ENCODE measurements at regions of chr10 and their contacts with region 1.

Region 1: GRCh38 chr10:70758757-70759514 is 26.2 kb downstream of the TBATA start:
- DNase-seq: peak; percentile 43
- ATAC-seq: peak; percentile 68
- H3K4me3 ChIP-seq: no peak overlapping the region
- H3K27ac ChIP-seq: no peak overlapping the region
- H3K4me1 ChIP-seq: peaks cover 2% of the 10 kb centered on the region
- H3K27me3 ChIP-seq: no peaks in the 10 kb centered on the region
- CTCF ChIP-seq: peak; percentile 76

Region 2: GRCh38 chr10:69696073-69696731 is 1062.7 kb before region 1 on chr10:
- intact Hi-C with region 1: no loop called
- DNase-seq: no peak
- ATAC-seq: peak; percentile 91
- H3K4me3 ChIP-seq: no peak overlapping the region
- H3K27ac ChIP-seq: no peak overlapping the region
- H3K4me1 ChIP-seq: no peaks in the 10 kb centered on the region
- H3K27me3 ChIP-seq: no peaks in the 10 kb centered on the region
- CTCF ChIP-seq: peak; percentile 70

Region 3: GRCh38 chr10:70461215-70461986 is 297.5 kb before region 1 on chr10:
- intact Hi-C with region 1: loop called (anchors 10 kb)
- DNase-seq: no peak
- ATAC-seq: peak; percentile 72
- H3K4me3 ChIP-seq: no peak overlapping the region
- H3K27ac ChIP-seq: no peak overlapping the region
- H3K4me1 ChIP-seq: peaks cover 18% of the 10 kb centered on the region
- H3K27me3 ChIP-seq: peaks cover 7% of the 10 kb centered on the region
- CTCF ChIP-seq: peak; percentile 86

Region 4: DNA sequence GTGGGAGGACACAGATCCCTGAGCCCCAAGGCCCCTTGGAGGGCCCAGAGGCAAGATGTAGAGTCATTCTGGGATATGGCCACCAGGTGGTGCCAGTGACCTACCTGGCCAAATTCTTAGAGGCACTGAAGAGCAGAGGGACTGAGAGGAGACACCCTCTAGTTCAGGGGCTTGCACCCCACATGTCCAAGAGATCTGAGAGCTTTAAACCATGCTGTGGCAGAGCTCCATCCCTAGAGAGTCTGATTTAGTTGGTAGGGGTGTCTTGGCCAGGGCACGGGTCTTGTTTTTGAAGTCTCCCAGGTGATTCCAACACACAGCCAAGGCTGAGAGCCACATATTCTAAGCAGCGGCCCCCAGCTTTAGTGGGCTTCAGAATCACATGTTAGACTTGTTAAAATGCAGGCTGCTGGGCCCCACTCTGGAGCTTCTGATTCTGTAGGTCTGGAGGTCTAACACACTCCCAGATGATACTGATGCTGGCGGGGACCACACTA is 208.9 kb before region 1 on chr10:
- intact Hi-C with region 1: loop called (anchors 5 kb)
- DNase-seq: no peak
- ATAC-seq: peak; percentile 79
- H3K4me3 ChIP-seq: no peak overlapping the region
- H3K27ac ChIP-seq: no peak overlapping the region
- H3K4me1 ChIP-seq: peaks cover 14% of the 10 kb centered on the region
- H3K27me3 ChIP-seq: no peaks in the 10 kb centered on the region
- CTCF ChIP-seq: peak; percentile 90

Region 5: GRCh38 chr10:70560511-70560941 is 198.4 kb before region 1 on chr10:
- intact Hi-C with region 1: no loop called
- DNase-seq: peak; percentile 55
- ATAC-seq: no peak
- H3K4me3 ChIP-seq: no peak overlapping the region
- H3K27ac ChIP-seq: peak overlapping the region; percentile 11
- H3K4me1 ChIP-seq: peaks cover 42% of the 10 kb centered on the region
- H3K27me3 ChIP-seq: no peaks in the 10 kb centered on the region
- CTCF ChIP-seq: no peak

Region 6: DNA sequence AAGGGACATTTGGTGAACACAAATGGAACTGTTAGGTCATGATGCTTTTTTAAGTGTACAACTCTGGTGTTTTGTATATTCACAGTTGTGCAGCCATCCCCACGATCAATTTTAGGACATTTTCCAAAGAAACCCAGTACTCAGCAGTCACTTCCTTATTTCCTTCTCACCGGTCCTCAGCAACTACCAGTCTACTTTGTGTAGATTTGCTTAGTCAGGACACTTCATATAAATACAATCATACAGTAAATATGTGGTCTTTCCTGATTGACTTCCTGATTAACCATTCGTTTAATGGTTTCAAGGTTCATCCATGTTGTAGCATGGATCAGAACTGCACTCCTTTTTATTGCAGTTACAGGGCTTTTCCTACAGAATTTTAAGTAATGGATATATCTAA is 71.2 kb after region 1 on chr10:
- intact Hi-C with region 1: no loop called
- DNase-seq: no peak
- ATAC-seq: no peak
- H3K4me3 ChIP-seq: no peak overlapping the region
- H3K27ac ChIP-seq: no peak overlapping the region
- H3K4me1 ChIP-seq: peaks cover 23% of the 10 kb centered on the region
- H3K27me3 ChIP-seq: no peaks in the 10 kb centered on the region
- CTCF ChIP-seq: no peak